PC-9 (cell line): ENCODE measurements at regions of chr4 and their contacts with region 1.

Region 1: GRCh38 chr4:136241221-136241986 is 1290.9 kb downstream of the PCDH18 start:
- DNase-seq: no peak
- H3K4me3 ChIP-seq: no peak overlapping the region
- H3K27ac ChIP-seq: no peak overlapping the region
- H3K4me1 ChIP-seq: no peaks in the 10 kb centered on the region
- H3K27me3 ChIP-seq: no peaks in the 10 kb centered on the region
- CTCF ChIP-seq: no peak

Region 2: DNA sequence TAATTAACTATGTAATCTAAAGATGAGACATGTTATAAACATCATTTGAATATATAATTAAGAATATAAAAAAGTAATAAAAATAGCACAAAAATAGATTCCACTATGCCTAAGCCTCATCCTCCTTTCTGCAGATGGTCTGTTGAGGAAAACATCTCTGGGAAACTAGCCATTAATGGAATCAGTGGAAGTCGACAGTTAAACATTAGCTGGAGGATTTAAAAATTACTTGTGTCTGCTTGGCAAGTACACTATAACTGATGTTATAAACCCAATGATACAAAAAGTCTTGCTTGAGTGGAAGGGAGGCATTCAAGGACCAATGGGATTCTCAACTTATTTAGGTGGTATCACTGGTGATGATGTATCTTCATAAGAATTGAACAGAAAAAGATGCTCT is 307.4 kb before region 1 on chr4:
- CTCF ChIA-PET with region 1: interaction called, 12 read pairs
- POLR2A ChIA-PET with region 1: no interaction called
- intact Hi-C with region 1: no loop called
- DNase-seq: no peak
- H3K4me3 ChIP-seq: no peak overlapping the region
- H3K27ac ChIP-seq: no peak overlapping the region
- H3K4me1 ChIP-seq: no peaks in the 10 kb centered on the region
- H3K27me3 ChIP-seq: no peaks in the 10 kb centered on the region
- CTCF ChIP-seq: no peak